ENCODE measurements at regions of chr12 and their contacts with region 1.

Region 1: GRCh38 chr12:55982319-55982936 is 8.6 kb downstream of the RAB5B start:
- DNase-seq: no peak
- ATAC-seq: no peak
- H3K4me3 ChIP-seq: no peak overlapping the region
- H3K27ac ChIP-seq: no peak overlapping the region
- H3K4me1 ChIP-seq: no peaks in the 10 kb centered on the region
- H3K27me3 ChIP-seq: no peaks in the 10 kb centered on the region
- CTCF ChIP-seq: no peak

Region 2: DNA sequence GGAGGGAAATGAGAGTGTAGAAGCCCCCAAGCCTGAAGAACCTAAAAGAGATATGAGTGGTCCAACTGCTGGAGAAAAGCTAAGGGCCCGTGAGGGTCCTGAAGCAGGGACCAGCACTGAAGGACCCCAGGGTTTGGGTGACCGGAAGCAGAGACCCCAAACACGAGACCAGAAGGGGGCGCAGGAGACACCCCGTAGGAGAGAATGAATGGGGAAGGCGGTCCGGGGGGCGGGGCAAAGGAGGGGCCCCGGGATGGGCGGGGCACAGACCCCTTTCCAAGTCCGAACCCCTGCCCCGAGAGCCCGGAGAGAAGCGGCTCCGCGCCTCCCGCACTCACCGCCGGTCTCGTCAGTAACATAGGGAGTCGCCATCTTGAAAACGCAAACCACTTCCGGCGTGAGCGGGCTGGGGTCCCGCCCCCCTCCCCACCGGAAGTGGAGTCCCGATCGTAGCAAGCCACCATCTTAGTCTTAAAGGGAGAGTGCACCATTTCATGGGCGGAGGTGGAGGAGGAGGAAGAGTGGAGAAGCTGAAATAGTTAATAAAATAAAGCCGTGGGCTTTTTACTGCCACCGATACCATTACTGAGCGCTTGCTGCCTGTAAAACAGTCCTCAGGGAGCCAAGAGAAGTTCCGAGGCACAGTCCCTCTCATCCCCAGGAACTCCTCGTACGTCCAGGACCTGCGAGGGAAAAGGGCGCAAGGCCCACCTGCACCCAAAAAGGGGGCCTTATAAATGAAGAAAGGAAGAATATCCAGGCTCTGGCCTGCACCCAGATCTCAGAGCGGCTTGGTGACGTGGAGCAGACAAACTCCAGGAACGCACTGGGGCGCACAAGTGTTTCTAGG is 55.5 kb before region 1 on chr12:
- CTCF ChIA-PET with region 1: no interaction called
- POLR2A ChIA-PET with region 1: no interaction called
- in situ Hi-C with region 1: no loop called
- intact Hi-C with region 1: no loop called
- DNase-seq: peak; percentile 84
- ATAC-seq: peak; percentile 89
- H3K4me3 ChIP-seq: peak overlapping the region; percentile 67 to 91
- H3K27ac ChIP-seq: peak overlapping the region; percentile 100
- H3K4me1 ChIP-seq: peaks cover 32% of the 10 kb centered on the region
- H3K27me3 ChIP-seq: no peaks in the 10 kb centered on the region
- CTCF ChIP-seq: peak; percentile 96

Region 3: GRCh38 chr12:57431721-57432188 is 1449.3 kb after region 1 on chr12:
- CTCF ChIA-PET with region 1: no interaction called
- POLR2A ChIA-PET with region 1: interaction called, 15 read pairs
- in situ Hi-C with region 1: no loop called
- intact Hi-C with region 1: no loop called
- DNase-seq: no peak
- ATAC-seq: no peak
- H3K4me3 ChIP-seq: peak overlapping the region; percentile 60 to 62; a peak in 3 of 4 replicates
- H3K27ac ChIP-seq: peak overlapping the region; percentile 98
- H3K4me1 ChIP-seq: peaks cover 6% of the 10 kb centered on the region
- H3K27me3 ChIP-seq: no peaks in the 10 kb centered on the region
- CTCF ChIP-seq: no peak